Heart left ventricle (tissue), 16 donors: ENCODE measurements at regions of chr7 and their contacts with region 1.

Region 1: DNA sequence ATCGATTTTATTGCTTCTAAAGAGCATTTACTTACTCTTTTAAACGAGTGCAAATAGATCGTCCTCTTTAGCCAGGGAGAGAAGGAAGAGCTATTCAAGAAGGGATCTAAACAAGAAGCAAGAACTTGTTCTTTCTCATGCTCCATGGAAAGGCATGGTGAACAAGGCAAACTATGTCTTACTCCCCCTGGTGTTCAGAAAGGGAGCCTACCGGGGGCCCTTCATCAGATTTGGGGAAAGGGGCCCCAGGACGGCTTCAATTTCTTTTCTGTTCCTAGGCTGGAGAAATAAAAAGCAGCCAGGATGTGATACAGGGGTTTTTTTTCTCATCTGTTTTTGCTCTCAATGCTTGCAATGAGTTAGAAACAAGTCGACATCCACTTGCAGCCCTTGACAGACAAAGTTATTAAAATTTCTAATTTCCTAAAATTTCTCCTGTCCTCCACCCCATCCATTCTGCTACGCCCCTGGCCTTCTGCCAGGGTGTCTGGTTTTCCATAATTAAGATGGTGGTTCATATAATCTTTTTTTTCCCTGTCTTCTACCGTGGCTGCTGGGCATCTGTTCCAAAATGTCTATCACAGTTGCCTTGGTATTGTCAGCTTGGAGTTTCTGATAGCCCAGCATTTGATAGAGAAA is 214.4 kb downstream of the CREB5 start:
- DNase-seq: no peak
- ATAC-seq: peak in 2 of 4 donors; percentile 17 to 37
- H3K4me3 ChIP-seq: no peak overlapping the region
- H3K27ac ChIP-seq: peak overlapping the region in 4 of 12 donors; percentile 2 to 43 (median 40)
- H3K4me1 ChIP-seq: peaks cover 0 to 80% (median 34%) of the 10 kb centered on the region in 12 donors
- H3K27me3 ChIP-seq: no peaks in the 10 kb centered on the region
- CTCF ChIP-seq: peak; percentile 46 to 79 (median 71)
- POLR2A ChIP-seq: no peak

Region 2: GRCh38 chr7:28298870-28299518 is 327.7 kb before region 1 on chr7:
- intact Hi-C with region 1: loop called in 5 of 10 experiments (anchors 5 to 10 kb)
- DNase-seq: peak in 3 of 5 donors; percentile 24 to 34 (median 28)
- ATAC-seq: peak; percentile 66 to 89 (median 82)
- H3K4me3 ChIP-seq: no peak overlapping the region
- H3K27ac ChIP-seq: peak overlapping the region in 1 of 12 donors; percentile 21
- H3K4me1 ChIP-seq: peaks cover 0 to 12% (median 7%) of the 10 kb centered on the region in 12 donors
- H3K27me3 ChIP-seq: no peaks in the 10 kb centered on the region
- CTCF ChIP-seq: peak in 9 of 12 donors; percentile 29 to 57 (median 44)
- POLR2A ChIP-seq: no peak

Region 3: GRCh38 chr7:28389504-28390395 is 237.0 kb before region 1 on chr7:
- intact Hi-C with region 1: loop called in 9 of 10 experiments (anchors 1 to 10 kb)
- DNase-seq: no peak
- ATAC-seq: peak in 2 of 4 donors; percentile 38 to 44
- H3K4me3 ChIP-seq: peak overlapping the region in 11 of 12 donors; percentile 8 to 52 (median 43)
- H3K27ac ChIP-seq: peak overlapping the region in 4 of 12 donors; percentile 1 to 53 (median 38)
- H3K4me1 ChIP-seq: peaks cover 0 to 5% (median 0%) of the 10 kb centered on the region in 12 donors
- H3K27me3 ChIP-seq: peaks cover 0 to 3% (median 0%) of the 10 kb centered on the region in 9 donors
- CTCF ChIP-seq: peak; percentile 73 to 92 (median 84)
- POLR2A ChIP-seq: no peak

Region 4: GRCh38 chr7:28408960-28409715 is 217.6 kb before region 1 on chr7:
- intact Hi-C with region 1: loop called in 6 of 10 experiments (anchors 5 kb)
- DNase-seq: peak; percentile 95 to 97 (median 97)
- ATAC-seq: peak; percentile 80 to 90 (median 84)
- H3K4me3 ChIP-seq: peak overlapping the region; percentile 70 to 90 (median 84)
- H3K27ac ChIP-seq: peak overlapping the region; percentile 53 to 98 (median 90)
- H3K4me1 ChIP-seq: peaks cover 0 to 57% (median 25%) of the 10 kb centered on the region in 12 donors
- H3K27me3 ChIP-seq: peaks cover 0 to 28% (median 0%) of the 10 kb centered on the region in 9 donors
- CTCF ChIP-seq: no peak
- POLR2A ChIP-seq: peak; percentile 41 to 84

Region 5: GRCh38 chr7:28536259-28536658 is 90.5 kb before region 1 on chr7:
- intact Hi-C with region 1: loop called in 2 of 10 experiments (anchors 10 kb)
- DNase-seq: no peak
- ATAC-seq: peak in 2 of 4 donors; percentile 40 to 49
- H3K4me3 ChIP-seq: no peak overlapping the region
- H3K27ac ChIP-seq: no peak overlapping the region
- H3K4me1 ChIP-seq: peaks cover 0 to 16% (median 9%) of the 10 kb centered on the region in 12 donors
- H3K27me3 ChIP-seq: no peaks in the 10 kb centered on the region
- CTCF ChIP-seq: peak in 4 of 12 donors; percentile 8 to 33 (median 20)
- POLR2A ChIP-seq: no peak

Region 6: GRCh38 chr7:28685644-28686417 is 59.1 kb after region 1 on chr7:
- intact Hi-C with region 1: loop called in 8 of 10 experiments (anchors 1 to 10 kb)
- DNase-seq: peak; percentile 87 to 97 (median 95)
- ATAC-seq: peak; percentile 90 to 96 (median 94)
- H3K4me3 ChIP-seq: peak overlapping the region; percentile 9 to 65 (median 58)
- H3K27ac ChIP-seq: peak overlapping the region; percentile 59 to 96 (median 88)
- H3K4me1 ChIP-seq: peaks cover 7 to 55% (median 34%) of the 10 kb centered on the region in 12 donors
- H3K27me3 ChIP-seq: no peaks in the 10 kb centered on the region
- CTCF ChIP-seq: no peak
- POLR2A ChIP-seq: peak in 1 of 2 donors; percentile 71

Region 7: GRCh38 chr7:28726555-28726954 is 99.8 kb after region 1 on chr7:
- intact Hi-C with region 1: no loop called
- DNase-seq: no peak
- ATAC-seq: peak in 3 of 4 donors; percentile 67 to 78 (median 76)
- H3K4me3 ChIP-seq: no peak overlapping the region
- H3K27ac ChIP-seq: peak overlapping the region in 2 of 12 donors; percentile 27 to 30
- H3K4me1 ChIP-seq: peaks cover 0 to 35% (median 21%) of the 10 kb centered on the region in 12 donors
- H3K27me3 ChIP-seq: no peaks in the 10 kb centered on the region
- CTCF ChIP-seq: no peak
- POLR2A ChIP-seq: no peak

Region 8: DNA sequence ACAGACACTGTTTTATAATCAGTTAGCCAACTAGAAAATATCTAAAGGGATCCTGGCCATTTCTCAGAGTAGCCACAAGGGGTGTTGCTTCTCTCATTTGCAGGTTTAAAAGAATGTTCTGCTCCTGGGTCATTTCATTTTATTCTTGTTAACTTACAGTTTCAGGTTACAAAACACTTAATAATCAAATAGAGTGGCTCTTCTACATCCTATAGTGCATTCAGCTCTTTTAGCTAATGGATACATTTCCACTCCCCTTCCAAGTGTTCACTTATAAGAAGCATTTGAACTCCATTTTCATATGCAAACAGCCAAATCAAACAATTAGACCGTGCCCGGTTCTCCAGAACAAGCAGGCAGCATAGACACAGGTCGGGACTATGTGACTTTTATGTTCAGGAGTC is 213.9 kb after region 1 on chr7:
- intact Hi-C with region 1: loop called in 2 of 10 experiments (anchors 5 to 10 kb)
- DNase-seq: no peak
- ATAC-seq: no peak
- H3K4me3 ChIP-seq: no peak overlapping the region
- H3K27ac ChIP-seq: no peak overlapping the region
- H3K4me1 ChIP-seq: peaks cover 0 to 13% (median 0%) of the 10 kb centered on the region in 12 donors
- H3K27me3 ChIP-seq: no peaks in the 10 kb centered on the region
- CTCF ChIP-seq: peak in 10 of 12 donors; percentile 24 to 49 (median 32)
- POLR2A ChIP-seq: no peak

Region 9: GRCh38 chr7:28976022-28976421 is 349.3 kb after region 1 on chr7:
- intact Hi-C with region 1: no loop called
- DNase-seq: no peak
- ATAC-seq: peak in 2 of 4 donors; percentile 16 to 20
- H3K4me3 ChIP-seq: no peak overlapping the region
- H3K27ac ChIP-seq: peak overlapping the region in 1 of 12 donors; percentile 15
- H3K4me1 ChIP-seq: peaks cover 0 to 8% (median 0%) of the 10 kb centered on the region in 12 donors
- H3K27me3 ChIP-seq: no peaks in the 10 kb centered on the region
- CTCF ChIP-seq: no peak
- POLR2A ChIP-seq: no peak